Activated CD4-positive, alpha-beta T cell treated with anti-CD3 and anti-CD28 coated beads, Interleukin-2, amount 10 ng/mL, durations not matched to agents 7 days and 5 days (primary cell): ENCODE measurements at regions of chr7 and their contacts with region 1.

Region 1: GRCh38 chr7:44097064-44097932 is 6.8 kb upstream of the AEBP1 start:
- DNase-seq: no peak
- H3K4me3 Mint-ChIP-seq: no peak overlapping the region
- H3K27ac Mint-ChIP-seq: peak overlapping the region; percentile 63
- H3K4me1 Mint-ChIP-seq: peaks cover 23% of the 10 kb centered on the region
- H3K27me3 Mint-ChIP-seq: peaks cover 5% of the 10 kb centered on the region

Region 2: GRCh38 chr7:44112231-44113000 is 15.1 kb after region 1 on chr7:
- CTCF ChIA-PET with region 1: interaction called, 16 read pairs
- POLR2A ChIA-PET with region 1: no interaction called
- DNase-seq: no peak
- H3K4me3 Mint-ChIP-seq: no peak overlapping the region
- H3K27ac Mint-ChIP-seq: no peak overlapping the region
- H3K4me1 Mint-ChIP-seq: no peaks in the 10 kb centered on the region
- H3K27me3 Mint-ChIP-seq: no peaks in the 10 kb centered on the region

Region 3: GRCh38 chr7:44123190-44124003 is 26.1 kb after region 1 on chr7 and contains the start of gene POLD2:
- CTCF ChIA-PET with region 1: interaction called, 11 read pairs
- POLR2A ChIA-PET with region 1: no interaction called
- DNase-seq: peak; percentile 98
- H3K4me3 Mint-ChIP-seq: peak within 1 kb of the TSS; percentile 87
- H3K27ac Mint-ChIP-seq: peak within 1 kb of the TSS; percentile 89
- H3K4me1 Mint-ChIP-seq: peaks cover 33% of the 10 kb centered on the region
- H3K27me3 Mint-ChIP-seq: peaks cover 12% of the 10 kb centered on the region
- total RNA-seq, gene POLD2: 117 to 128 TPM